ENCODE measurements at regions of chr4 and their contacts with region 1.

Region 1: DNA sequence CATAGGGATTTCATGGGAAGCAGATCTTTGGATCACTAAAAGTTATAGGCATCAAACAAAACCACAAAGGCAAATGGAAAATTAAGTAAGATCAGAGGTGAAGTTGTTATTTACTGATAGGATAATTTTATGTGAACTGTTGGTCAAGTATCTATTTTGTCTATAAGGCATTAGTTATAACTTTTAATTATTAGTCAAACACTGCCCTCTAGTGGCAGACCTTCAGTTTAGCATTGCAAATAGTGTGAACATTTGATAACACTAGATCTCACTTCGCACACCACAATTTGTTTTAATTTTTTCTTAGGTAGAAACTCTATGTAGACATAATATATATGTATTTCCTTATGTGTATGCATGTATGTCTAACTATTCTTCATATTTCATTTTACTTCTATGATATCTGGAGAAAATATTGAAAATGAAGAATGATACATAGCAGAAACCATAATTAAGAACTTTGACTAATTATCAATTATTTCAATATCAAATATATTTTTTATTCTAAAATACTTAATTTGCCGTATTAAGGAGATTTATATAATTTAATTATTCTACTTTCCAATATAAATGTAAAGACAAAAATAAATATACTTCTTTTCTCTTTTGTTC is 214.5 kb upstream of the TACR3 start:
- DNase-seq: peak; percentile 25
- H3K4me3 ChIP-seq: no peak overlapping the region
- H3K27ac ChIP-seq: no peak overlapping the region
- H3K4me1 ChIP-seq: no peaks in the 10 kb centered on the region
- H3K27me3 ChIP-seq: no peaks in the 10 kb centered on the region
- CTCF ChIP-seq: peak; percentile 65 to 78

Region 2: GRCh38 chr4:103204111-103204510 is 730.2 kb before region 1 on chr4:
- CTCF ChIA-PET with region 1: no interaction called
- dilution Hi-C with region 1: no loop called
- in situ Hi-C with region 1: no loop called
- intact Hi-C with region 1: loop called (anchors 1 kb)
- DNase-seq: peak; percentile 9
- H3K4me3 ChIP-seq: no peak overlapping the region
- H3K27ac ChIP-seq: no peak overlapping the region
- H3K4me1 ChIP-seq: no peaks in the 10 kb centered on the region
- H3K27me3 ChIP-seq: no peaks in the 10 kb centered on the region
- CTCF ChIP-seq: peak; percentile 47 to 66

Region 3: DNA sequence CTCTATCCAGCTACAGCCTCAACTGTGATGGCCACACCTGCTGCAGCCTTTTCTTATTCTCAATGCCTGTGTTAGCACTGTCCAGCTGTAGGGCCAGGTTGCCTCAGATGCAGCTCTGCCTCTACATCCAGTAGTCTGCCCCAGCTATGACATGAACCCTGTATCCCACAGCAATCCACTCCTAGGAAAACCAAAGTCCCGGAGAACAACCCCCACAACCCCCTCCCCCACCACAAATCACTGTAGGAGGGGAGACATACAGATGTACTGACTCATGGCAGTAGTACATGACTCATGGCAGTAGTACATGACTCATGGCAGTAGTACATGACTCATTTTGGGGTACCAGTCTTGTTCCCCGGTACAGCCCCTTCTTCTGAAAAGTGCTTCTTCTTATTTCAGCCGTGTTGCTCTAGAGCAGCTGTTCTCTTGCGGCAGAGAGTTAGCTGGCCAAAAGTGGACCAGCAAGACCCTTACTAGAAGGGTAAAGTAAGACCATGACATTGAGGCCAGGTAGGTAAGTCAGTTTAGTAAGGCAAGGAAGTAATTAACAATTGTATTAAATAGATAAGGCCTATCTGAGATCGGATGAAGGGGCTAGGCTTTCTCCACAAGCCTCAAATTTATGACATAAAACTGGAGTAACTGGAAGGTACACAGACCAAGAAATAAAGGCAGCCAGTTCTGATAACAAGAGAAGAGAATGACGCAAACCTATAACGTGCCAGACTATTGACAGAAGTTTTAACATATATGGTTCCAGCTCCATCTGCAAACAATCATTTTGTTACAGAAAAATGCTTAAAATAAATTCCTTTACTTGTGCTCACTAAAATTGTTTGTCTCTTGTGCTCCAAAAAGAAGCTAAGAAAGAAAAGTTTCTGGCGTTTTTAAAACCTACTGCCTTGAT is 435.9 kb before region 1 on chr4:
- CTCF ChIA-PET with region 1: no interaction called
- dilution Hi-C with region 1: no loop called
- in situ Hi-C with region 1: loop called in 1 of 2 experiments (anchors 25 kb)
- intact Hi-C with region 1: no loop called
- DNase-seq: peak; percentile 55
- H3K4me3 ChIP-seq: no peak overlapping the region
- H3K27ac ChIP-seq: peak overlapping the region; percentile 2
- H3K4me1 ChIP-seq: peaks cover 40% of the 10 kb centered on the region
- H3K27me3 ChIP-seq: no peaks in the 10 kb centered on the region
- CTCF ChIP-seq: no peak

Region 4: GRCh38 chr4:103786014-103786413 is 148.3 kb before region 1 on chr4:
- CTCF ChIA-PET with region 1: no interaction called
- dilution Hi-C with region 1: no loop called
- in situ Hi-C with region 1: no loop called
- intact Hi-C with region 1: loop called (anchors 5 kb)
- DNase-seq: peak; percentile 30
- H3K4me3 ChIP-seq: no peak overlapping the region
- H3K27ac ChIP-seq: no peak overlapping the region
- H3K4me1 ChIP-seq: no peaks in the 10 kb centered on the region
- H3K27me3 ChIP-seq: no peaks in the 10 kb centered on the region
- CTCF ChIP-seq: peak; percentile 57 to 85

Region 5: DNA sequence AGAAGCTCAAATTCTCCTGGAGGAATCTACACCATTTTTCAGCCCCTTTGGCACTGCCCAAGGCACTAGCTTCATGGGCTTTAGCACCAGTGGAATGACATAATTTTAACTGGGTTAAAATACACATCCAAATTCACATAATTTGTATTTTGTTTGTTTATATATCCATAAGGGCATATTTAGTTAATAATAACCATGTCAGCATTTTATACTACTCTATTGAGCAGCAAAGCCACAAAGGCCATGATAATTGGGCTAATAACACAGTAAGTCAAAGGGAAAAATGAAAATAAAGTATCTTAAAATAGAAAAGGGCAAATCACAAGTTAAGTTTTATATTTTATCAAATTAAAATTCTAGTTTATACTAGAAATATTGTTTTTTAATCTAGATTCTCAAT is 48.2 kb after region 1 on chr4:
- CTCF ChIA-PET with region 1: no interaction called
- dilution Hi-C with region 1: no loop called
- in situ Hi-C with region 1: no loop called
- intact Hi-C with region 1: no loop called
- DNase-seq: no peak
- H3K4me3 ChIP-seq: no peak overlapping the region
- H3K27ac ChIP-seq: no peak overlapping the region
- H3K4me1 ChIP-seq: no peaks in the 10 kb centered on the region
- H3K27me3 ChIP-seq: peaks cover 2% of the 10 kb centered on the region
- CTCF ChIP-seq: no peak

Region 6: GRCh38 chr4:104015680-104016253 is 81.5 kb after region 1 on chr4:
- CTCF ChIA-PET with region 1: no interaction called
- dilution Hi-C with region 1: no loop called
- in situ Hi-C with region 1: no loop called
- intact Hi-C with region 1: no loop called
- DNase-seq: no peak
- H3K4me3 ChIP-seq: no peak overlapping the region
- H3K27ac ChIP-seq: no peak overlapping the region
- H3K4me1 ChIP-seq: no peaks in the 10 kb centered on the region
- H3K27me3 ChIP-seq: no peaks in the 10 kb centered on the region
- CTCF ChIP-seq: peak; percentile 26 to 51

Region 7: DNA sequence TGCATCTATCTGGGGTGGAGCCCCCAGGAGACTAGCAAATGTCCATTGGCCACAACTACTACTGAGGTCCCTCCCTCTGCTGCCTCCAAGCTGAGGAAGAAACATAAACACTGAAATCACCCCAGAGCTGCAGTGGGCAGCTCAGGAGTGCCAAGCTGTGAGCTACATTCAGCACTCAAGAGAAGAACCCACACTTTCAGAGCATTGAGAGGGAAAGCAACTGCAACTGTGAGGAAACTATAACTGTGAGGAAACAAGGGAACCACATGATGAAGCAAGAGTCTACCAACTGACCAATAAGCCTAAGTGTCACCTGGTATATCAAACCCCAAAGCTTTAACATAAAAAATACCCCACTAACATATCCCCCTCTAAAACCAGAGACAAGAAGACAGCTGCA is 159.0 kb after region 1 on chr4:
- CTCF ChIA-PET with region 1: no interaction called
- dilution Hi-C with region 1: no loop called
- in situ Hi-C with region 1: no loop called
- intact Hi-C with region 1: no loop called
- DNase-seq: no peak
- H3K4me3 ChIP-seq: no peak overlapping the region
- H3K27ac ChIP-seq: no peak overlapping the region
- H3K4me1 ChIP-seq: no peaks in the 10 kb centered on the region
- H3K27me3 ChIP-seq: no peaks in the 10 kb centered on the region
- CTCF ChIP-seq: no peak

Measured in mammary epithelial cell (primary cell).